PC-3 (cell line): ENCODE measurements at regions of chr4 and their contacts with region 1.

Region 1: GRCh38 chr4:113187358-113187757 is 137.9 kb downstream of the ANK2 start:
- DNase-seq: no peak
- ATAC-seq: no peak
- H3K4me3 ChIP-seq: no peak overlapping the region
- H3K27ac ChIP-seq: no peak overlapping the region
- H3K4me1 ChIP-seq: no peaks in the 10 kb centered on the region
- H3K27me3 ChIP-seq: no peaks in the 10 kb centered on the region; the same call in 1 of the 2 replicates
- CTCF ChIP-seq: no peak

Region 2: DNA sequence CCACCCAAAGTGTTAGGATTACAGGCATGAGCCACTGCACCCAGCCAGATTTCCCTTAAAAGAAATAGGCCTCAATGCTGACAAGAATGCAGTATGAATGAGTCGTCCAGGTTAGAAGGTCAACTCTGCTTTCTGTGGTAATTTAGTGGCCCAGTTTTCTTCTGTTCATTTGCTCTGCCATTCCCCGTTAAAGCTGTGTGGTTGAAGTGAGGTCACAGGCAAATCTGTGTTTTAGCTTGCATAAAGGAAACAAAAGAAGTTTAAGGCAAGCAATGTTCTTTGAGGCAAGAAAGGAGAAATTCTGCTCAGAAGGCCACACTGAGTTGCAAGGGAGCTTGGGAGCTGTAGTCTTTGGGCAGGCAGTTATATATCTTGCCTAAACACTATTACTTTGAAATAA is 373.6 kb before region 1 on chr4:
- CTCF ChIA-PET with region 1: no interaction called
- POLR2A ChIA-PET with region 1: interaction called, 14 read pairs
- intact Hi-C with region 1: no loop called
- DNase-seq: no peak
- ATAC-seq: no peak
- H3K4me3 ChIP-seq: no peak overlapping the region
- H3K27ac ChIP-seq: no peak overlapping the region
- H3K4me1 ChIP-seq: no peaks in the 10 kb centered on the region
- H3K27me3 ChIP-seq: no peaks in the 10 kb centered on the region
- CTCF ChIP-seq: no peak

Region 3: GRCh38 chr4:113935190-113935589 is 747.8 kb after region 1 on chr4:
- CTCF ChIA-PET with region 1: no interaction called
- POLR2A ChIA-PET with region 1: no interaction called
- intact Hi-C with region 1: no loop called
- DNase-seq: peak; percentile 8
- ATAC-seq: no peak
- H3K4me3 ChIP-seq: no peak overlapping the region
- H3K27ac ChIP-seq: no peak overlapping the region
- H3K4me1 ChIP-seq: no peaks in the 10 kb centered on the region
- H3K27me3 ChIP-seq: no peaks in the 10 kb centered on the region
- CTCF ChIP-seq: no peak